AG04450 (cell line): ENCODE measurements at regions of chr17 and their contacts with region 1.

Region 1: DNA sequence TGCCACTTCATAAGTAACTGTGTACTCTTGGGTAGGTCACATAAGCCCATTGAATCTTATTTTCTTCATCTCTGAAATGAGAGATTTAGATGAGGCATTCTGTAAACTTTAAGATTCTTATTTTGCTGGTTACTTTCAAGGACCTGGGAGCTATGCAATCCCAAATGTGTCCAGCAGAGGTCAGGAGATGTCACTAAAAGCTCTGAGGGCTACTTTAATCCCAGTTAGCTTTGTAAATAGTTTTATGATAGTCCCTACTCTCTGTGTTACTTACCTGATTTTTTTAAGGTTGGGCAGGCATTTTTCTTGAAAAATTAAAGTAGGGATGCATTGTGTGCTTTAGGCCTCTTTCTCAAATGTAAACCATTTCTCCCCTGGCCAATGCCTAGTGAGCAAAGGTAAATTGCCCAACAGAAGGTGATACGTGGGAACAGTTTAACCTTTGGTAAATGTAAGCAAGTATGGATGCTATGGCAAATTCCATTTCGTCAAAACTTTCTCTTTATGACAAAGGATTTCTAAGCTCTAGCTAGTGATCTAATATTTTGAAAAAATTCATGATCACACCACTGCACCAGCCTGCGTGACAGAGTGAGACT is 57.1 kb upstream of the WSB1 start:
- DNase-seq: peak; percentile 59
- H3K4me3 ChIP-seq: no peak overlapping the region
- H3K27ac ChIP-seq: no peak overlapping the region
- H3K27me3 ChIP-seq: no peaks in the 10 kb centered on the region
- CTCF ChIP-seq: peak; percentile 95

Region 2: GRCh38 chr17:27206447-27206846 is 30.4 kb before region 1 on chr17:
- CTCF ChIA-PET with region 1: interaction called, 25 read pairs
- POLR2A ChIA-PET with region 1: no interaction called
- DNase-seq: no peak
- H3K4me3 ChIP-seq: no peak overlapping the region
- H3K27ac ChIP-seq: no peak overlapping the region
- H3K27me3 ChIP-seq: peaks cover 5% of the 10 kb centered on the region
- CTCF ChIP-seq: peak; percentile 30; the same call in 1 of the 2 replicates

Region 3: DNA sequence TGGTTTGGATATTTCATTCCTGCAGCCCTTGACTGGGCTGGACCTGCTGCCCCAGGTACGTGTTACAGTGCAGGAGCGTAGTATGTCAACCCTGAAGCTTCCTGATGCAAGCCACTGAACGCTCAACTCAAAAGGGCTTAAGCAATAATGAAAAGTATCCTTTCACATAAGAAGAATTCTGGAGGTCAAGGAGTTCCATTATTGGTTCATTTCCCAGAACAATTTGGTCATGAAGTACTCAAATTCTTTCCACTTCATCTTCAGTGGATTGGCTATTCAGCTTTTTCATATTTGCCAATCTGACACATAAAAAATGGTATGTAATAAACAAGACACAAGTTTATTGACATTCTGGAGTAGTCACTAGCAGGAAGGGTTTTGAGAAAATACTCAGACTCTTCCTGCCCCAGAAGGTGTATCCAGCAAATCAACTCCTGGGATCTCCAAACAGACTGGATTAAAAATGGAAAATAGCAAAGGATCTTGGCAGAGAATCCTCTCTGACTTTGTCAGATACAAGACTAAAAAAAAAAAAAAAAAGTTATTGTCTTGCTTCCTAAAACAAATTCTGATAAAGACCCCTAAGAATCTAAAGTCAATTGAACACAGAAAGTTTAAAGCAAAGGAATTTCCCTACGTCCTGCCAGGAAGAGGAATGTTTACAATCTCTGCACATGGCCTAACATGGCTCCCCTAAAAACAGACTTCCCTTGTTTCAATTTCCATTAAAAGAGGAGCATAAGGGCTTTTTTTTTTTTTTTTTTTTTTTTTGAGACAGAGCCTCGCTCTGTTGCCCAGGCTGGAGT is 19.6 kb after region 1 on chr17:
- CTCF ChIA-PET with region 1: interaction called, 16 read pairs
- POLR2A ChIA-PET with region 1: no interaction called
- DNase-seq: peak; percentile 63
- H3K4me3 ChIP-seq: no peak overlapping the region
- H3K27ac ChIP-seq: peak overlapping the region; percentile 73
- H3K27me3 ChIP-seq: no peaks in the 10 kb centered on the region
- CTCF ChIP-seq: no peak

Region 4: GRCh38 chr17:27315322-27315721 is 78.5 kb after region 1 on chr17:
- CTCF ChIA-PET with region 1: interaction called, 41 read pairs
- POLR2A ChIA-PET with region 1: interaction called, 3 read pairs
- DNase-seq: peak; percentile 86
- H3K4me3 ChIP-seq: no peak overlapping the region
- H3K27ac ChIP-seq: peak overlapping the region; percentile 57
- H3K27me3 ChIP-seq: no peaks in the 10 kb centered on the region
- CTCF ChIP-seq: no peak

Region 5: DNA sequence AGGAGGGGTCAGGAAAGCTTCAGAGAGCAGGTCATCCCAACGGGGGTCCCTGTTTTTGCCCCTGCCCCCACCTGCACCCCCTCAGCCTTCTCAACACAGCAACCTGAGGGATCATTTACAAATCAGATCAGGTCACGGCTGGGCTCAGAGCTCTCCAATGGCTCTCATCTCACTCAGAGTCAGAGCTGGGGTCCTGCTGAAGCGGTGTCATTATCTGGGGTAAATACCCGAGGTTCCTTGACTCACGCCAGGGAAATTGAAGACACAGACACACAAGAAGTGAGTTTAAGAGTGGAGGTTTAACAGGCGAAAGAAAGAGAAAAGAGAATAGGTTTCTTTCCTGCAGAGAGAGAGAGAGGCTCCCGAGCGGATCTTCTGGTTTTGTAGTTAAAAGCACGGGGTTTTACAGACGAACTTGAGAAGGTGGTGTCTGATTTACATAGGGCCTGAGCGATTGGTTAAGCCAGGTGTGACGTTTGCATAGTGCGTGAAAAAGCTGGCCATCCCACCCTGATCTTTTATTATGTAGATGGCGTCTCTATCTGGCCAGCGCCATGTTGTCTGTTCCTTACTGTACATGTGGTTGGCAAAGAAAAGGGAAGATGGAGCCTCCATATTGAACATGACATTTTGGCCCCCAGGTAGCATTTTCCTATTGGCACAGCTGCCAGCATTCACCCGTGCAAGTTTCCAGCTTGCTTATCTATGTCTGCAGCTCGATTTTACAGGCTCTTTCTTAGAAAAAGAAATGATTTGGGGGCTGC is 108.5 kb after region 1 on chr17:
- CTCF ChIA-PET with region 1: interaction called, 36 read pairs
- POLR2A ChIA-PET with region 1: no interaction called
- DNase-seq: no peak
- H3K4me3 ChIP-seq: no peak overlapping the region
- H3K27ac ChIP-seq: no peak overlapping the region
- H3K27me3 ChIP-seq: no peaks in the 10 kb centered on the region
- CTCF ChIP-seq: no peak

Region 6: DNA sequence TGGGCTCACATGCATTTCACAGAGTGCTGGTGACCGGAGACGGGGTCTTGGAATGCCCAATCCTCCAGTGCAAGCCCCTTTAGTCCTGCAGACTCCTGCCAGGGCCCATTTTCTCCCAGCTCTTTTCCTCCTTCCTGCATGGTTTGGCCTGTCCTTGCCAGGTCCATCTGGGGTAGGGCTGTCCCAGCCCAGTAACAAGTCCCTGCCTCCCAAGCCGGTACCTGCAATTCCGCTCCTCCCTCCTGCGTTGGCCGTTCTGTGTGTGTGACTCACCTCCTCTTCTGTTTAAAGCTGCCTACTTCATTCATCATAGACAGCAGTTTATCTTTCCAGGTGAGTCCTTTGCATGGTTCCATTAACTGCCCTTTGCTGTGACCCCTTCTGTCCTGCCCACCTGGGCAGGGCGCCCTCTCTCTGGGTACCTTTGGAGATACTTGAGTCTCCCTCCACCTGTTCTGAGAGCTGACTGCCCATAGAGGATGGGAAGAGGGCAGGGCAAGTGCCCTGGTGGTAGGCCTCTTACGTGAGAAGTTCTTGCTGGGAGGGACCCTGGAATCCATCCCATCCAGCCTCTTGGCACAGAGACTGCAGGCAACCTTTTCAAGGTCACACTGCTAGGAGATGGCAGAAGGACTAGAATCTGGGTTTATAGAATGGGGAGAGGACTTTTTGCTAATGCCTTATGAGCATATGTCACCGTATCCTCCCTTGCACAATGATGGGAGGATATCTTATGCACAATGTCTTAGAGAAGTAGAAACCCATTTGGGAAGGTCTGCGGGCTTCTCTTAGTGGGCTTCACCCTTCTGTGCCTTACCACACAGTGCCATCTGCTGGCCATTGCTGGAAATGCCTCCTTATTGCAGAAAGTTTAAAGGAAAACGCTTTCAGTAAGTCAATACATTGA is 364.5 kb after region 1 on chr17:
- CTCF ChIA-PET with region 1: interaction called, 41 read pairs
- POLR2A ChIA-PET with region 1: no interaction called
- DNase-seq: peak; percentile 72
- H3K4me3 ChIP-seq: no peak overlapping the region
- H3K27ac ChIP-seq: no peak overlapping the region
- H3K27me3 ChIP-seq: no peaks in the 10 kb centered on the region
- CTCF ChIP-seq: peak; percentile 98